ENCODE measurements at regions of chr6 and their contacts with region 1.

Region 1: DNA sequence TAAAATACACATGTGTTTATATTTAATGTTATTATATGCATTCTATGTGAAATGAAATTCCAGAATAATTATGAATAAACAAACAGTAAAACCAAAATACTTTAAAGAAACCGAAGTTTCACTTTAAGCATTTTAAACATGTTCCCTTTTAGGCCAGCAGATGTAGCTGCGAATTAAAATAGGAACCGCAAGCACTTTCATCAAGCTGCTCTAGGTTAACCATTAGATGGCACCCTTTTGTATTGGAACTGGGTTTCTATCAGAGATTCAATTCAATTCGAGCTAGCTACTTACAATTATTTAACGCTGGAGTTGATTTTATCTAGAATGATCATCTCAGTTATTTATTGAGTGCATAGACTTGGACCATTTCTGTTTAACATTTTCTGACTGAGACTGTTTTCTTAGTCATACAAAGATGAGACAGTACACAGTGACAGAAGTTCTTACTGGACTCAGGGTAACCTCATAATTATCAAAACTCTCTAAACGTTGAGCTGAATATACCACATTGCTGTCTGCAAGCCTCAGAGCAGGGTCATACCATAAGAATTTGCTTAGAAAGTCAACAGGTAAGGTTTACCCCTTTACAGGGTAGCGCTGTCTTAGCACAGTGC is 8.5 kb downstream of the TMEM242 start:
- DNase-seq: peak; percentile 59
- H3K4me3 ChIP-seq: no peak overlapping the region
- H3K27ac ChIP-seq: no peak overlapping the region
- H3K4me1 ChIP-seq: peaks cover 14% of the 10 kb centered on the region
- H3K27me3 ChIP-seq: no peaks in the 10 kb centered on the region
- CTCF ChIP-seq: peak; percentile 88 to 93

Region 2: GRCh38 chr6:157379656-157380454 is 65.0 kb after region 1 on chr6:
- CTCF ChIA-PET with region 1: no interaction called
- dilution Hi-C with region 1: loop called (anchors 10 kb)
- in situ Hi-C with region 1: no loop called
- intact Hi-C with region 1: loop called (anchors 1 kb)
- DNase-seq: peak; percentile 84
- H3K4me3 ChIP-seq: peak overlapping the region; percentile 91 to 96 (median 92)
- H3K27ac ChIP-seq: peak overlapping the region; percentile 41
- H3K4me1 ChIP-seq: peaks cover 8% of the 10 kb centered on the region
- H3K27me3 ChIP-seq: no peaks in the 10 kb centered on the region
- CTCF ChIP-seq: no peak

Region 3: DNA sequence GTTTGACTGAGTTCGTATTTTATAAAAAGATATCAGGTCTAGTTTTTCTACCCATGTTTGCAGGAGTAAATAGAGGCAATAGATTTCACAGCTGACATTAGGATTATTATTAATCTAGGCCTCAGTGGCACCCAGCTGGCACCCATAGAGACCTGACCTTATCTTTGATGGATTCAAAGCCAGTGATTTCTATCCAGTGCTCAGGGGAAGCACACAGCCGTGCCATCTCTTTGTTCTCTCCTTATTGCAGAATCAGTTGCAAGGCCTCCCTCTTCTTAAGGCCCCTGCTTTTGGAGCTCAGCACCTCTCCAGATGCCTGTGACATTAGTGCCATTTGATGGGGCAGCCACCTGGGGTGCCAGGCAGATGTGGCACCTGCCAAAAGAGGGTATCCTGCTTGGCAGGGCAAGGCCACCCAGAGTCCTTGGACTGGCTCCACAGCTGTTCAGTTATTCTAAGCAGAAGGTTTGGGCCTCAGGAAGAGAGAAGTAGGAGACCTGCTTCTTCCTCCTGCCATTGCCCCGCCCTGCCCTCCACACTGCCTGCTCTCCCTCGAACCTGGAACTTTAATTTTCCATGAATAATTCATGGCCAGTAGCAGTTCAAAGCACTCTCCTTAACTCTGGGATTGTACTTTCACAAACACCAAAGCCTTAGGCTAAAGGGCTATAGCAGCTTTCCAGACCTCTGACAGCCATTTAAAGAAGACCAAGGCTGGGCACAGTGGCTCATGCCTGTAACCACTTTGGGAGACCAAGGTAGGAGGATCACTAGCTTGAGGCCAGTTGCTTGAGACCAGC is 272.5 kb after region 1 on chr6:
- CTCF ChIA-PET with region 1: no interaction called
- dilution Hi-C with region 1: no loop called
- in situ Hi-C with region 1: no loop called
- intact Hi-C with region 1: no loop called
- DNase-seq: no peak
- H3K4me3 ChIP-seq: no peak overlapping the region
- H3K27ac ChIP-seq: no peak overlapping the region
- H3K4me1 ChIP-seq: no peaks in the 10 kb centered on the region
- H3K27me3 ChIP-seq: no peaks in the 10 kb centered on the region
- CTCF ChIP-seq: no peak

Region 4: DNA sequence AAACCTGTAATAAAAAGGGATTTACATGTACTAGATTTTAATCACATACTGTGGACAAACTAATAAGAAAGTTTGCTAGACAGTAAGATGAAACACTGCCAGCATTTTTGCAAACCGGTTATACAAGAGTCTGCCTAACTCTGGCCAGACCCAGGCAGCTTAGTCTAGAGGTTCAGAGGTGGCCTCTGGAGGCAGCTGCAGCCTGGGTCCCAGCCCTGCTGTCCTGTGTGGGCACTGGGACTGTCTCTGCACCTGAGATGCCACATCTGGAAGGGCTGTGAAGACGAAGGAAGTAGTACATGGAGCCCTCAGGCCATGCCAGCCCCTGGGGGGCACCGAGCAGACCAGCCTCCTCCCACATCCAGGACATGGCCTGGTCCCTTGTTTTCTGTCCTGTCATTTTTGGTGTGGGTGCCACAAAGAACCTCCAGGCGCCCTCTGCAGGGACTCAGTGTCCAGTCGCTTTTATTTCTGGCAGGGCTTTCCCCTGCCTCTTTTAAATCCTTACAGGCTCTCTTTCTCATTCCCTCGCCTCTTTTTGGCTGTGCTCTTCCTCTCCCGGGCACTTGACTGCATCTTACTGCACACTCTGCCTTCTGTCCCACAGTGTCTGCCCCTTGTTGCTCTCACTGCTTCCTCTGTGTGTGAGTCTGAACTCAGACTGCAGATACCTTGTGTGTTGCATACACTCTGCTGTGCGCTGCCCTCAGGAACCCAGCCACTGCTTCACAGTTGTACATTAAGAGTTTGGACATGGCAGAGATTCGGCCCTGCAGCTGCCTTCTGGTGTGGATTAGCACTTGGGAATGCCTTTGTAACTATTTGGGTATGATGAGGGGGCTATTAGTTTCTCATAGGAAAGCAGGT is 282.9 kb after region 1 on chr6:
- CTCF ChIA-PET with region 1: no interaction called
- dilution Hi-C with region 1: no loop called
- in situ Hi-C with region 1: loop called in 1 of 2 experiments (anchors 10 kb)
- intact Hi-C with region 1: loop called (anchors 1 kb)
- DNase-seq: peak; percentile 24
- H3K4me3 ChIP-seq: no peak overlapping the region
- H3K27ac ChIP-seq: no peak overlapping the region
- H3K4me1 ChIP-seq: no peaks in the 10 kb centered on the region
- H3K27me3 ChIP-seq: no peaks in the 10 kb centered on the region
- CTCF ChIP-seq: peak; percentile 29 to 66

Region 5: GRCh38 chr6:157873735-157874344 is 559.0 kb after region 1 on chr6:
- CTCF ChIA-PET with region 1: no interaction called
- dilution Hi-C with region 1: no loop called
- in situ Hi-C with region 1: loop called in 1 of 2 experiments (anchors 25 kb)
- intact Hi-C with region 1: loop called (anchors 10 kb)
- DNase-seq: peak; percentile 56
- H3K4me3 ChIP-seq: no peak overlapping the region
- H3K27ac ChIP-seq: no peak overlapping the region
- H3K4me1 ChIP-seq: no peaks in the 10 kb centered on the region
- H3K27me3 ChIP-seq: no peaks in the 10 kb centered on the region
- CTCF ChIP-seq: peak; percentile 82 to 96

Region 6: GRCh38 chr6:158500016-158500735 is 1185.4 kb after region 1 on chr6:
- CTCF ChIA-PET with region 1: no interaction called
- dilution Hi-C with region 1: no loop called
- in situ Hi-C with region 1: no loop called
- intact Hi-C with region 1: no loop called
- DNase-seq: peak; percentile 40
- H3K4me3 ChIP-seq: no peak overlapping the region
- H3K27ac ChIP-seq: no peak overlapping the region
- H3K4me1 ChIP-seq: peaks cover 8% of the 10 kb centered on the region
- H3K27me3 ChIP-seq: no peaks in the 10 kb centered on the region
- CTCF ChIP-seq: no peak

Measured in mammary epithelial cell (primary cell).